ENCODE measurements at regions of chr7 and their contacts with region 1.

Region 1: DNA sequence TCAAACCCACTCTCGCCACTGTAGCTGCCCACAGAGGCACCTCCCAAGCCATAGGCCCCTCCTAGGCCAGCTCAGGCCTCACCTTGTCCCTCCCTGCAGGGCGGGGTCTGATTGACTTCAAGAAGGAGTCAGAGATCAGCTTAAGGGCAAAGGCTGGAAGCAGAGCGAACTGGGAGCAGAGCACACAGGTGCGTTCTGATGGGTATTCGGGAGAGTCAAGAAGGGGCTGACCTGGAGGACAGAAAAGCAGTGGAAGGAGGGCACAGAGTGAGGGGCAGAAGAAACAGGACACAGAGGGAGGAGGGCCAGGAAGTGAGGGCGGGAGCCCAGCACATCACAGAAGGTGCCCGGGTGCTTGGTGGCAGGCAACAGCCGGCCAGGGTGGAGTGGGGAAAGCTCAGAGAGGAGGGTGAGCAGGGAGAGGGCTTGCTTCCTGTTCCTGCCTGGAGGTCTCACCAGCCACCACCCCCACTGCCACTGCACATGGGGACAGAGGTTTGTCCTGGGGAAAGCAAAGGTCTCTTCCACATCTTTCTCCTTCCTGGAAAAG is at the start of gene AOC1:
- DNase-seq: peak; percentile 92 to 94
- ATAC-seq: peak; percentile 98
- total RNA-seq, gene AOC1: 566 to 682 TPM

Region 2: GRCh38 chr7:150567169-150567568 is 285.3 kb before region 1 on chr7 and contains the start of gene GIMAP4:
- intact Hi-C with region 1: loop called in 1 of 2 experiments (anchors 10 kb)
- DNase-seq: no peak
- ATAC-seq: no peak
- total RNA-seq, gene GIMAP4: 8.4 to 16.2 TPM

Region 3: GRCh38 chr7:151038951-151039849 is 186.8 kb after region 1 on chr7:
- intact Hi-C with region 1: no loop called
- DNase-seq: peak; percentile 55 to 63
- ATAC-seq: peak; percentile 76

Measured in left colon (tissue), 2 donors.